Esophagus muscularis mucosa (tissue), 4 donors: ENCODE measurements at regions of chr2 and their contacts with region 1.

Region 1: DNA sequence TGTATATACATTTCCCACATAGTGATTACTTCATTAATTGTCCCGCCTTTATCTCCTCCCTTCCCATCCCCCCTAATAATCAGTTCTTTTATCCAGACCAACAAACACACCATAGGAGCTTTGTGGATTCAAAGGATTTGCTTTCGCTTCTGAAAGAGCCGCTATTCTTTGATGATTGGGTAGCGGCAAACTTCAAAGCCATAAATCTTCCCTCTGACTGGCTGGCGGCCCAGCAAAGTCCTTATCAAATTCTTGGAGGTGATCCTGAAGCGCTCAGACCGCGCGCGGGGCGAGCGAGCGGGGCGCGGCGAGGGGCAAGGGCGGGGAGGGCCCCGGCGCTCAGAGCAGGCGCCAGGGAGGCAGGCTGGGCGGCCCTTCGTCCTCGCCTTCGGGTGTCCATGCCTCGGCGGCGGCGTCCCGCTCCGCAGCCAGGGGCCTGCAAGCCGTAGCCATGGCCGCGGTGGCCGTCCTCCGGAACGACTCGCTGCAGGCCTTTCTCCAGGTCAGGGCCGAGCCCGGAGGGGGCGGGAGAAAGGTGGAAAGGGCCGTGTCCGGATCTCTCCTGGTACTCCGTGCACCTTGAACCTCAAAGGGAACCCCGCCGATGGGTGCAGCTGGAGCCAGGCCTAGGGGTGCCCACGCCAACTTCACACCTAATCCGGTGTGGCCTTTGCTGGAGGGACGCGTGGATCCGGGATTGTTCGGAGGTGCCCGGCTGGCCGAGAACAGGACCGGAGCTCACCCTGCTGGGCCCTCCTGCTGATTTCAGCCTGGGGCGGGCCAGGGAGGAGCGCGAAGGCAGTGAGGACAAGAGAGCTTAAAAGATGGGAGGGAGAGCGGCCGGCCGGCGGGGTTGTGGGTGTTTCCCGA is at the start of gene SP5:
- DNase-seq: peak; percentile 91
- H3K4me3 ChIP-seq: peak within 1 kb of the TSS; percentile 50 to 67 (median 54)
- H3K27ac ChIP-seq: peak within 1 kb of the TSS in 2 of 4 donors; percentile 27 to 43
- H3K4me1 ChIP-seq: peaks cover 36 to 55% (median 53%) of the 10 kb centered on the region in 4 donors
- H3K27me3 ChIP-seq: peaks cover 11 to 92% (median 57%) of the 10 kb centered on the region in 4 donors
- CTCF ChIP-seq: no peak
- EP300 ChIP-seq: no peak
- POLR2A ChIP-seq: no peak
- total RNA-seq, gene SP5: 0.32 to 0.63 TPM in 2 of 4 donors, not detected in the others

Region 2: GRCh38 chr2:170409164-170409535 is 306.1 kb before region 1 on chr2:
- intact Hi-C with region 1: loop called (anchors 5 kb)
- DNase-seq: no peak
- H3K4me3 ChIP-seq: peak overlapping the region in 1 of 4 donors; percentile 25
- H3K27ac ChIP-seq: no peak overlapping the region
- H3K4me1 ChIP-seq: peaks cover 4 to 13% (median 10%) of the 10 kb centered on the region in 4 donors
- H3K27me3 ChIP-seq: peaks cover 0 to 15% (median 0%) of the 10 kb centered on the region in 4 donors
- CTCF ChIP-seq: peak; percentile 70 to 87 (median 78)
- EP300 ChIP-seq: no peak
- POLR2A ChIP-seq: no peak

Region 3: GRCh38 chr2:170486730-170487129 is 228.6 kb before region 1 on chr2:
- intact Hi-C with region 1: loop called (anchors 10 kb)
- DNase-seq: no peak
- H3K4me3 ChIP-seq: no peak overlapping the region
- H3K27ac ChIP-seq: no peak overlapping the region
- H3K4me1 ChIP-seq: no peaks in the 10 kb centered on the region
- H3K27me3 ChIP-seq: no peaks in the 10 kb centered on the region
- CTCF ChIP-seq: peak in 1 of 3 experiments; percentile 11
- EP300 ChIP-seq: no peak
- POLR2A ChIP-seq: no peak

Region 4: DNA sequence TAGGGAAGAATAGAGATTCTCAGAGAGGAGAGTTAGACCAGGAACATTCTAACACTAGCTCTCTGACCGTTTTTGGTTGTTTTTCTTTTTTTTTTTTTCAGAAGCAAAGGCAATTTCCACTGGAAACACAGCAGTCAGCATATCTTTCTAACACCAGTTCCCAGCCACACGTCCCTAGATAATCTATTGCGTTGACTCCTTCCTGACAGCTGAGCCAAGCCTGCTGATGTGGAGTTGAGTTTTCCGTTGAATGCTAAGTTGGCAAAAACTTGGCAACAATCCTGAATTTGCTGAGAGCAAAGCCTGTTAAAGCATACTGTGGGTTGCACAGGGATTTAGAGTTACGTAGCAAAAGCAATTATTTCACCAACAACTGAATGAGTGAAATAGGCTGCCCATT is 120.7 kb after region 1 on chr2:
- intact Hi-C with region 1: no loop called
- DNase-seq: no peak
- H3K4me3 ChIP-seq: no peak overlapping the region
- H3K27ac ChIP-seq: no peak overlapping the region
- H3K4me1 ChIP-seq: no peaks in the 10 kb centered on the region
- H3K27me3 ChIP-seq: peaks cover 0 to 8% (median 0%) of the 10 kb centered on the region in 4 donors
- CTCF ChIP-seq: no peak
- EP300 ChIP-seq: no peak
- POLR2A ChIP-seq: no peak